Activated naive CD4-positive, alpha-beta T cell treated with anti-CD3 and anti-CD28 coated beads for 36 hours (primary cell): ENCODE measurements at regions of chr14 and their contacts with region 1.

Region 1: GRCh38 chr14:101823511-101824120 is 62.1 kb downstream of the PPP2R5C start:
- DNase-seq: peak; percentile 86
- H3K4me3 Mint-ChIP-seq: peak overlapping the region; percentile 70
- H3K27ac Mint-ChIP-seq: peak overlapping the region; percentile 98
- H3K4me1 Mint-ChIP-seq: peaks cover 86% of the 10 kb centered on the region
- H3K27me3 Mint-ChIP-seq: no peaks in the 10 kb centered on the region

Region 2: DNA sequence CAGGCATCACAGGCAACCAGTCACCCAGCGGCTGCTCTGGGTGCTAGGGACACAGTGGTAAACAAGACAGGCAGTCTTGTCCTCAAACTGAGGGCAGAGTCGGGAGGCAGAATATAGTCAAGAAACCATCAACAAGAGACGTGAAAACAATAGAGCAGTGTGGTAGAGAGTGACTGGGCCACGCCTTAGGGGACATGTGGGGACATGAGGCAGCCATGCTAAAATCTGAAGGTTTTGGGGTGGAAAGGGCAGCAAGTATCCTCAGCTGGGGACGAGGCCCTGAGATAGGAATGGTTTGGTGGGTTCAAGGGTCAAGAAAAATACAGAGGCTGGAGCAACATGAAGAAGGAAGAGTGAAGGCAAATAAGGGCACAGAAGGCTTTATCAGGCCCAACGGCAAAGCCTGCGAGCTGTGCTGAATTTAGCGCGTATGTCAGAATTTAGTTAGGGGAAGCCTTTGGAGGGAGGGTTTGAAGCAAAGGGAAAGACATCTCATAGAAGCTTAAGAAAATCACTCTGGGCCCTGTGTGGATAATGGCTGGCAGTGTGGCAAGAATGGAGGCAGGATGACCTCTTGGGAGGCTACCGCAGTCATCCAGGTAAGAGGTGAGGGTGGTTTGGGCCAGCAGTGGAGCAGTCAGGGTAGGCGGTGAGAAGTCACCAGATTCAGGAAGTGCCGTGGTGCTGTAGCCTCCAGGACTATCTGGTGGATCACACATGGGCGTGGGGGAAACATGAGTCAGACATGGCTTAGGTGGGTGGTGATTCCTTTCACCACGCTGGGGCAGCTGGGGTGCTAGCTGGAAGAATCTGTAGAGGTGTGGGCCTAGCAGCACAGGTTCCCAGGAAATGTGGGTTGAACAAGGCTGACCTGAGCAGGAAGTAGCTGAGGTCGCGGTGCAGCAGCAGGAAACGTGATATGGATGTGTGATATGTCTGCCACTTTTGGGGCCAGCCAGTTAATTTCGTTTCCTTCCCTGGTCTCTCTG is 1755.4 kb before region 1 on chr14:
- CTCF ChIA-PET with region 1: no interaction called
- intact Hi-C with region 1: loop called (anchors 5 kb)
- DNase-seq: peak; percentile 92
- H3K4me3 Mint-ChIP-seq: peak overlapping the region; percentile 83
- H3K27ac Mint-ChIP-seq: peak overlapping the region; percentile 100
- H3K4me1 Mint-ChIP-seq: peaks cover 74% of the 10 kb centered on the region
- H3K27me3 Mint-ChIP-seq: no peaks in the 10 kb centered on the region

Region 3: GRCh38 chr14:101761032-101761880 is 62.4 kb before region 1 on chr14 and contains the start of gene PPP2R5C:
- CTCF ChIA-PET with region 1: no interaction called
- intact Hi-C with region 1: loop called (anchors 1 kb)
- DNase-seq: peak; percentile 85
- H3K4me3 Mint-ChIP-seq: peak within 1 kb of the TSS; percentile 91
- H3K27ac Mint-ChIP-seq: peak within 1 kb of the TSS; percentile 79
- H3K4me1 Mint-ChIP-seq: peaks cover 42% of the 10 kb centered on the region
- H3K27me3 Mint-ChIP-seq: no peaks in the 10 kb centered on the region
- total RNA-seq, gene PPP2R5C: 280 to 294 TPM

Region 4: GRCh38 chr14:101809671-101810514 is 13.7 kb before region 1 on chr14:
- CTCF ChIA-PET with region 1: interaction called, 9 read pairs
- intact Hi-C with region 1: loop called (anchors 1 kb)
- DNase-seq: peak; percentile 94
- H3K4me3 Mint-ChIP-seq: peak overlapping the region; percentile 83
- H3K27ac Mint-ChIP-seq: peak overlapping the region; percentile 95
- H3K4me1 Mint-ChIP-seq: peaks cover 42% of the 10 kb centered on the region
- H3K27me3 Mint-ChIP-seq: no peaks in the 10 kb centered on the region

Region 5: DNA sequence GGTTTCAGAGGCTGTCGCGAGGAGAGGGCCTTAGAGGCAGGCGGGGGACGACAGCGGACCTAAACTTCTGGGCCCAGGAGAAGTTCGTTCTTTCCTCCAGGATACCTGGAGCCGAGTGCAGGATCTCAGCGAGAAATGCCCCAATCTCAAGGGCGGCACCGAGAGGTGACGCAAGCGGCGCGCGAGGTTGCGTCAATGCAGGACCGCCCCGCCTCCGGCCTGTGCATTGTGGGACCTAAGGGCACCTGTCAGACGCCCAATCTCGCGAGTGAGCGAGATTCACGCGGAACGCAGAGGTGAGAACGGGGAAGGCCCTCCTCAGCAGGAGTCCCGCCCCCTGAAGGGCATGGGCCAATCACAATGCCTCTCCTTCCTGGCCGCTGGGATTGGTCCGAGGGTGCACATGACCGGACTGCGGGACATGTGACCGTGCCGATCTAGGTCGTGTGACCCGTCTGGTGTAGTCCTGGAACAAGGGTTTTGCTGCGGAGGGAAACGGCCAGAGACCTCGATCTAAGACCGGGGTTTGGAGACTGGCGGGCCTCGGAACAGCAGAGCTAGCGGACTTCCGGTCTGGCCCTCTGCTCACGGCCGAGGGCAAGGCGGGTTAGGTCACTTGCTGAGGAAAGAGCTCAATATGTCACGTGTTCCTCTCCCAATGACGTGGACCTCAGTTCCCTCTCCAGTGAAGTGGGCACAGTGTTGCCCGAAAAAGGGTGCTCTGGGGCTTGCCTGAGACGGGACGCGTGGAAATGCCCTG is 124.5 kb after region 1 on chr14:
- CTCF ChIA-PET with region 1: interaction called, 4 read pairs
- intact Hi-C with region 1: loop called (anchors 2 kb)
- DNase-seq: peak; percentile 100
- H3K4me3 Mint-ChIP-seq: peak overlapping the region; percentile 98
- H3K27ac Mint-ChIP-seq: peak overlapping the region; percentile 97
- H3K4me1 Mint-ChIP-seq: peaks cover 18% of the 10 kb centered on the region
- H3K27me3 Mint-ChIP-seq: peaks cover 20% of the 10 kb centered on the region

Region 6: GRCh38 chr14:102086972-102087761 is 263.6 kb after region 1 on chr14 and contains the start of gene HSP90AA1:
- CTCF ChIA-PET with region 1: no interaction called
- intact Hi-C with region 1: loop called (anchors 2 kb)
- DNase-seq: peak; percentile 92
- H3K4me3 Mint-ChIP-seq: peak within 1 kb of the TSS; percentile 97
- H3K27ac Mint-ChIP-seq: peak within 1 kb of the TSS; percentile 95
- H3K4me1 Mint-ChIP-seq: peaks cover 49% of the 10 kb centered on the region
- H3K27me3 Mint-ChIP-seq: no peaks in the 10 kb centered on the region
- total RNA-seq, gene HSP90AA1: 1,286 to 1,366 TPM